PC-3 (cell line): ENCODE measurements at regions of chr3 and their contacts with region 1.

Region 1: DNA sequence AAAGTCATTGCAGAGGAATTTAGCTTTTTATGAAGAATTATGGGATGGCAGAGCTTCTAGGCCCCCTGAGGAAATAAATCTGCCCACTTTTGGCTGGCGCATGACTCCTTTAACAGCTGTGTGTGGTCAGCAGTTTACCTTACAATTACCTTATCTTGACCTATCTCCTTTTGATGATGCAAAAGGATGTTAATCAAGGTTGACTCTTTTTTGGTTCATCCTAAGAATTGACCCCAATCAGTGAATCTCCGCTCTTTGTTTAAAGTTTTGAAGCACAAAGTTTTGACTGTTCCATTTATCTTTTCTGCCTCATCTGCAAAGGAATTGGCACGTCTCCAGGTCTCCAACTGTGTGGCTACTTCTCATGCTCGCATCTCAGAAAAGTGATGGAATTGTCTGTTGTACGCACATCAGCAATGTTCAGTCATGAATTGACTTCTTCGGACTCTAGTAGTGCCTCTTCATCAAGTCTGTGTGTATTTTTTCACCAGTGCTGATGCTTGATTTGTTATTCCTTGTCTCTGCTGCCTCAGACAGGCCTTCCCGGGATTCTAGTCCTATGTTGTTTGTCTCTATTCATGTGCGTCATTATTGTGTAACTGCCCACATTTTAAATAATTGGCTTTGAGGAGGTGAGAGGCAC is 196.2 kb upstream of the CFAP20DC start:
- DNase-seq: peak; percentile 82
- ATAC-seq: peak; percentile 11
- H3K4me3 ChIP-seq: peak overlapping the region; percentile 32
- H3K27ac ChIP-seq: peak overlapping the region; percentile 95
- H3K4me1 ChIP-seq: peaks cover 57% of the 10 kb centered on the region
- H3K27me3 ChIP-seq: no peaks in the 10 kb centered on the region
- CTCF ChIP-seq: no peak

Region 2: GRCh38 chr3:58874795-58875194 is 371.2 kb before region 1 on chr3:
- CTCF ChIA-PET with region 1: no interaction called
- POLR2A ChIA-PET with region 1: no interaction called
- intact Hi-C with region 1: loop called (anchors 10 kb)
- DNase-seq: peak; percentile 88
- ATAC-seq: peak; percentile 85
- H3K4me3 ChIP-seq: peak overlapping the region; percentile 33; the same call in 1 of the 2 replicates
- H3K27ac ChIP-seq: peak overlapping the region; percentile 97
- H3K4me1 ChIP-seq: peaks cover 37% of the 10 kb centered on the region
- H3K27me3 ChIP-seq: no peaks in the 10 kb centered on the region
- CTCF ChIP-seq: no peak

Region 3: DNA sequence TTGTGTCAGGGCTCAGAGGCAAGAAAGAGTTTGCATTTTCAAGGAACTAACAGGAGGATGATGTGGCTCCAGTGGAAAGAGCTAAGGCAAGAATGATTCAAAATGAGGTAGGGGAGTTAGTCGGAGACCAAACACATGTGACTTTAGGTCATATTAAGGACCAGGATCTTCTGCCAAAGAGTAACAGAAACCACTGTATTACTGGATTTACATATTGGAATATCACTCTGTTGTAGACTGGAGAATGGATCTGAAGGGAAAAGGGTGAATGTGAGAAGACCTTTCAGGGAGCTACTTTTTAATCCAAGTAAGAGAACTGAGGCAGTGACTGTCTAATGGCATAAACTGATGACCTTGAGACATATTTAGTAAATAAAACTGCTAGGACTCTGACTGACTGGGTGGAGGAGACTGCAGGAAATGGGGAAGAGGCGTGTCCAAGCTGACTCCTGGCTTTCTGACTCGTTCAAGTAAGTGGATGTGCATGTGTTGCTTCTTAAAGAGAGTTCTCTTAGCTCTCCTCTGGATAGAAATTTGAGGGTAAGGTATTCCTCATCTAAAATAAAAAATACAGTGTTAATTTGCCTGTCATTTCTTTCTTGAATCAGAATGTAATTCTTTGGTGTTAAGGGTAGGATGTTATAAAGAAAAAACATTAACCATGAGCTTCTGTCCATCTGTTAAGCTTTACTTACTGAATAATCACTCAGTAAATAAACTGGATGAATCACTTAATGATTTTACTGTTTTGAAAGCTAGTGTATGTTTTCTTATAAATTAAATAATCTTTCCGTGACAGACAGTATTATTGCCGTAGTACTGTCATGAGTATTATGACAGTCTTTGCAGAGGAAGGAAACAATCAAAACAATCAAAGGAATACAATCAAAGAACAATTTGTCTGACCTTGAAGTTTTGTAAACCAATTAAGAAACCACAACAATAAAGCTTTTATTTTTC is 137.8 kb before region 1 on chr3:
- CTCF ChIA-PET with region 1: no interaction called
- POLR2A ChIA-PET with region 1: no interaction called
- intact Hi-C with region 1: loop called (anchors 2 kb)
- DNase-seq: peak; percentile 67
- ATAC-seq: peak; percentile 82
- H3K4me3 ChIP-seq: peak overlapping the region; percentile 8; the same call in 1 of the 2 replicates
- H3K27ac ChIP-seq: peak overlapping the region; percentile 72
- H3K4me1 ChIP-seq: peaks cover 36% of the 10 kb centered on the region
- H3K27me3 ChIP-seq: no peaks in the 10 kb centered on the region
- CTCF ChIP-seq: no peak

Region 4: DNA sequence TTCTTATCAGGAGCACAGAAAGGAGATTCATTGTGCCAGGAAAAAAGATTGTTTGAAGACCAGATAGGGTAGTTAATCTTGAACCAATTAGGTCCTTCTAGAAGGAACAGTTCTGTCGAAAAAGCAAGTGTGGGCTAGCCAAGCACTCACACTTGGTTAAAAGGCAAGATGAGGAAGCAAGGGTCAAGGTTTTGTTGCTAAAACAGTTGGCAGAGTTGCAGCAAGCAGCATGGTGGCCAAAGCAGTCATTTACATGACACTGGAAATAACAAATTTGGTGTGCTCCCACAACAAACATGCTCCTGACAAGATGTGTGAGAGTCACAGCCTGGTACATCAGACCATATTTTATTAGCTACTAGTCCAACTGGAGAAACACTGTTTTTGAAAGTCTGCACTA is 31.8 kb after region 1 on chr3:
- CTCF ChIA-PET with region 1: no interaction called
- POLR2A ChIA-PET with region 1: no interaction called
- intact Hi-C with region 1: loop called (anchors 1 kb)
- DNase-seq: no peak
- ATAC-seq: no peak
- H3K4me3 ChIP-seq: no peak overlapping the region
- H3K27ac ChIP-seq: no peak overlapping the region
- H3K4me1 ChIP-seq: peaks cover 23% of the 10 kb centered on the region
- H3K27me3 ChIP-seq: no peaks in the 10 kb centered on the region
- CTCF ChIP-seq: no peak

Region 5: DNA sequence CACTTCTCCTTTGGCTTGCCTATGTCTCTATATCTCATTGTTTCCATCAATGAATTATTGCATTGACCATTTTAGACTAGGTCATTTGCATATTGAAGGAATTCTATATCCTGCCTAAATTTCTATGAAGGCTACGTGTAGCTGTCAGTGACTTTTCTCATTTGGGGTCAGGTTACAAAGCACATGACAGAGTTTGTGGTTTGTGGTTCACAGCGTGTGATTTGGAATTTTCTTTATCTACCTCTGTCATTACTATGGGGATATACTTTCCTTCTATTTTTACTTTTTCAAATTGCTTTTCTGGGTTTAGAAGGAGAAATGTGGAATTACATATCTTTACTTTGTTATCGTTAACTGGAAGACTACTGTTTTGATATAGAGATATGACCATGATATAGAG is 121.2 kb after region 1 on chr3:
- CTCF ChIA-PET with region 1: no interaction called
- POLR2A ChIA-PET with region 1: no interaction called
- intact Hi-C with region 1: loop called (anchors 2 kb)
- DNase-seq: peak; percentile 60
- ATAC-seq: peak; percentile 63
- H3K4me3 ChIP-seq: no peak overlapping the region
- H3K27ac ChIP-seq: no peak overlapping the region
- H3K4me1 ChIP-seq: peaks cover 31% of the 10 kb centered on the region
- H3K27me3 ChIP-seq: no peaks in the 10 kb centered on the region
- CTCF ChIP-seq: no peak

Region 6: DNA sequence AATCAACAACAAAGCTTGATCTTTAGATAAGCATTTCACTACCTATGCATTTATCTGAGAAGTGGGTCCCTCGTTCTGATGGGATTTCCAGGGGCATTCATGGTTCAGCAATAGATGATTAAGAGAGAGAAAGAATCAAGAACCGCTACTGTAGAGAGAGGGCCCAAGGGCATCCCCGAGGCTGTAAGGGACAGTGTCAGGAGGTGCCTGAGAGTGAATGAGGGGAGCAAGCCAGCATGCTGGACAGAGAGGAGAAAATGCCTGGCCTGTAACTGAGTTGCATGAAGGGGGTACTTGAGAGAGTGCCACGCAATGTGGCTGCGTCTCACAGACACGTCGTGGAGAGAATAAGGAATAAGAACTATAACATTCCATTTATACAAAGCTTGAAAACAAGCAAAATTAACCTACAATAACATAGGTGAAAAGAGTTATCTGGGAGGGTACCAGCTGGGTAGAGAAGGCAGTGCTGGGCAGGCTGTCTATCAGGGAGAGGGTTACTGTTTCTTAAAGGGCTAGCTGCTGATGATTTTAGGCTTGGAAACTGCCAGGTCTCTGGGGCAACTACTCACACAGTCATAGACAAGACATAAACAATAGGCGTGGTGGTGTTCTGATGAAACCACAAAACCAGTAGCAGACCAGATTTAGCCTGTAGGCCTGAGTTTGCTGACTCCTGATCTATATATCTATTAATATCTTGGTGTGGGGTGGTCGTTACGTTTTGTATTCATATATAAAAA is 178.5 kb after region 1 on chr3:
- CTCF ChIA-PET with region 1: no interaction called
- POLR2A ChIA-PET with region 1: no interaction called
- intact Hi-C with region 1: loop called (anchors 5 kb)
- DNase-seq: peak; percentile 66
- ATAC-seq: no peak
- H3K4me3 ChIP-seq: no peak overlapping the region
- H3K27ac ChIP-seq: peak overlapping the region; percentile 64; the same call in 1 of the 2 replicates
- H3K4me1 ChIP-seq: peaks cover 48% of the 10 kb centered on the region
- H3K27me3 ChIP-seq: no peaks in the 10 kb centered on the region
- CTCF ChIP-seq: no peak

Region 7: GRCh38 chr3:59436164-59436958 is 190.4 kb after region 1 on chr3:
- CTCF ChIA-PET with region 1: no interaction called
- POLR2A ChIA-PET with region 1: no interaction called
- intact Hi-C with region 1: no loop called
- DNase-seq: no peak
- ATAC-seq: no peak
- H3K4me3 ChIP-seq: no peak overlapping the region
- H3K27ac ChIP-seq: no peak overlapping the region
- H3K4me1 ChIP-seq: no peaks in the 10 kb centered on the region
- H3K27me3 ChIP-seq: no peaks in the 10 kb centered on the region
- CTCF ChIP-seq: no peak

Region 8: DNA sequence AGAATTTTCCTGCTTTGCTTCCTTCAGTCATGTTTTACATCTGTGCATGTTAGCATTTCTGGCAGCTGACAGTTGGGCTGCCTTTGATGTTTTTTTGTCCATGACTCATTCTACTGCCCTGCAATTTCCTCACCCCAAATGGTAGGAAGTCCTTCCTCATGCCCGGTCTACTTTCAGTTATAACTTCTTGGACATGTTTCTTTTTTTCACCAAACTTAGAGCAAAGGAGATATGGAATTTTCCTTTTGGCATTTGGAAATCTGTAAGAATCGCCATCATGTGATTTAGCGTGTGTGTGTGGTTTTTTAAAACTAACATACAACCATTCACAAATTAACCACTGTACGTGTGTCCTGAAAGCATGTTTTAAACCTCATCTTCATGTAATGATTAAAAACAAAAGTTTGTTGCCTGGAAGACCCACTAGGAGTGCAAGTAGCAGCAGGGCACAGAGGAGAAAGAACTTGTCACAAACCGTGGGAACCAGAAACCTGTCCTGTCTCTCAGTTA is 234.6 kb after region 1 on chr3:
- CTCF ChIA-PET with region 1: no interaction called
- POLR2A ChIA-PET with region 1: no interaction called
- intact Hi-C with region 1: loop called (anchors 5 kb)
- DNase-seq: peak; percentile 74
- ATAC-seq: peak; percentile 76
- H3K4me3 ChIP-seq: no peak overlapping the region; the same call in 1 of the 2 replicates
- H3K27ac ChIP-seq: no peak overlapping the region
- H3K4me1 ChIP-seq: peaks cover 31% of the 10 kb centered on the region
- H3K27me3 ChIP-seq: no peaks in the 10 kb centered on the region
- CTCF ChIP-seq: no peak